CD8-positive, alpha-beta T cell (primary cell): ENCODE measurements at regions of chr17 and their contacts with region 1.

Region 1: DNA sequence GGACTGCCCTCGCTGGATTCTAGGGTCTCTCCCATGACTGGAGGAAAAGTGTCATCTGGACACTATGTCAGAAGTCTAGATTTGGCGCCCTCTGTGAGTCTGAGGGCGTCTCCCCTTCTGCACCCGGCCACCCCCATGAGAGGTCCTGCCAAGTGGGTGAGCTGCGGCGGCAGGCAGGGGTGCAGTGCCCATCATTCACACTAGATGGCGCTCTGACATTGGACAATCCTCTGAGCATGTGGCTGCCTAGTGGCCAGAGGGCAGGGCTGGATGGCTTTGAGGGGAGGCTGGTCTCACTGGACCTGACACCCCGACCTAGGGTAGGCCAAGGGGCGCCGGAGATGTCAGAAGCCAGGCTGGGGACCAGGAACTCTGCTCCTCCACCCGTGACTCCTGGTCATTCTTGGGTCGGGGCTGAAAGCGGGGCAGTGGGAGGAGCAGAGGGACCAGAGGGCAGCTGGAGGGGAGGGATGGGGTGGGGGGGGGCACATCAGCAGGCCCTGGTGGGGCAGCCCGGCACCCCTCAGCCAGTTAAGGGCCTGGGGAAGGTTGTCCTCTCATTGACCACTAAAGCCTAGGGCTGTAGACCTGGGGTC is 28.0 kb downstream of the MRM1 start:
- DNase-seq: peak; percentile 64 to 88 (median 80)
- ATAC-seq: peak; percentile 89
- H3K4me3 ChIP-seq: no peak overlapping the region
- H3K4me3 Mint-ChIP-seq: no peak overlapping the region
- H3K27ac ChIP-seq: no peak overlapping the region
- H3K27ac Mint-ChIP-seq: no peak overlapping the region
- H3K4me1 ChIP-seq: no peaks in the 10 kb centered on the region
- H3K4me1 Mint-ChIP-seq: no peaks in the 10 kb centered on the region
- H3K27me3 ChIP-seq: no peaks in the 10 kb centered on the region
- H3K27me3 Mint-ChIP-seq: peaks cover 5% of the 10 kb centered on the region
- CTCF ChIP-seq: peak; percentile 98

Region 2: GRCh38 chr17:36590082-36590481 is 39.3 kb before region 1 on chr17:
- CTCF ChIA-PET with region 1: no interaction called
- POLR2A ChIA-PET with region 1: no interaction called
- intact Hi-C with region 1: no loop called
- DNase-seq: peak in 1 of 9 experiments; percentile 24
- ATAC-seq: no peak
- H3K4me3 ChIP-seq: no peak overlapping the region
- H3K4me3 Mint-ChIP-seq: peak overlapping the region; percentile 5
- H3K27ac ChIP-seq: no peak overlapping the region
- H3K27ac Mint-ChIP-seq: peak overlapping the region; percentile 15
- H3K4me1 ChIP-seq: peaks cover 14% of the 10 kb centered on the region
- H3K4me1 Mint-ChIP-seq: peaks cover 24% of the 10 kb centered on the region
- H3K27me3 ChIP-seq: no peaks in the 10 kb centered on the region
- H3K27me3 Mint-ChIP-seq: no peaks in the 10 kb centered on the region
- CTCF ChIP-seq: no peak

Region 3: GRCh38 chr17:36705874-36706731 is 76.8 kb after region 1 on chr17:
- CTCF ChIA-PET with region 1: interaction called, 24 read pairs
- POLR2A ChIA-PET with region 1: no interaction called
- intact Hi-C with region 1: loop called (anchors 1 kb)
- DNase-seq: peak in 8 of 9 experiments; percentile 13 to 72 (median 48)
- ATAC-seq: peak; percentile 69
- H3K4me3 ChIP-seq: no peak overlapping the region
- H3K4me3 Mint-ChIP-seq: no peak overlapping the region
- H3K27ac ChIP-seq: no peak overlapping the region
- H3K27ac Mint-ChIP-seq: no peak overlapping the region
- H3K4me1 ChIP-seq: no peaks in the 10 kb centered on the region
- H3K4me1 Mint-ChIP-seq: no peaks in the 10 kb centered on the region
- H3K27me3 ChIP-seq: peaks cover 11 to 12% of the 10 kb centered on the region in 2 experiments
- H3K27me3 Mint-ChIP-seq: peaks cover 33% of the 10 kb centered on the region
- CTCF ChIP-seq: peak; percentile 73

Region 4: GRCh38 chr17:37047631-37048104 is 418.3 kb after region 1 on chr17:
- CTCF ChIA-PET with region 1: interaction called, 127 read pairs
- POLR2A ChIA-PET with region 1: interaction called, 3 read pairs
- intact Hi-C with region 1: loop called (anchors 1 kb)
- DNase-seq: peak; percentile 59 to 87 (median 81)
- ATAC-seq: peak; percentile 90
- H3K4me3 ChIP-seq: no peak overlapping the region
- H3K4me3 Mint-ChIP-seq: no peak overlapping the region
- H3K27ac ChIP-seq: no peak overlapping the region
- H3K27ac Mint-ChIP-seq: peak overlapping the region; percentile 71
- H3K4me1 ChIP-seq: no peaks in the 10 kb centered on the region
- H3K4me1 Mint-ChIP-seq: peaks cover 12% of the 10 kb centered on the region
- H3K27me3 ChIP-seq: no peaks in the 10 kb centered on the region
- H3K27me3 Mint-ChIP-seq: no peaks in the 10 kb centered on the region
- CTCF ChIP-seq: peak; percentile 68

Region 5: GRCh38 chr17:37239690-37240334 is 610.5 kb after region 1 on chr17:
- CTCF ChIA-PET with region 1: interaction called, 16 read pairs
- POLR2A ChIA-PET with region 1: no interaction called
- intact Hi-C with region 1: loop called (anchors 1 kb)
- DNase-seq: peak in 2 of 9 experiments; percentile 35 to 42
- ATAC-seq: no peak
- H3K4me3 ChIP-seq: no peak overlapping the region
- H3K4me3 Mint-ChIP-seq: no peak overlapping the region
- H3K27ac ChIP-seq: no peak overlapping the region
- H3K27ac Mint-ChIP-seq: no peak overlapping the region
- H3K4me1 ChIP-seq: no peaks in the 10 kb centered on the region
- H3K4me1 Mint-ChIP-seq: no peaks in the 10 kb centered on the region
- H3K27me3 ChIP-seq: no peaks in the 10 kb centered on the region
- H3K27me3 Mint-ChIP-seq: no peaks in the 10 kb centered on the region
- CTCF ChIP-seq: peak; percentile 61